MCF 10A (cell line): ENCODE measurements at regions of chr20 and their contacts with region 1.

Region 1: GRCh38 chr20:40970201-40970600 is 58.4 kb upstream of the TOP1 start:
- DNase-seq: no peak
- H3K4me3 Mint-ChIP-seq: no peak overlapping the region
- H3K27ac Mint-ChIP-seq: no peak overlapping the region
- H3K4me1 Mint-ChIP-seq: peaks cover 14% of the 10 kb centered on the region
- H3K27me3 Mint-ChIP-seq: no peaks in the 10 kb centered on the region
- CTCF ChIP-seq: no peak

Region 2: DNA sequence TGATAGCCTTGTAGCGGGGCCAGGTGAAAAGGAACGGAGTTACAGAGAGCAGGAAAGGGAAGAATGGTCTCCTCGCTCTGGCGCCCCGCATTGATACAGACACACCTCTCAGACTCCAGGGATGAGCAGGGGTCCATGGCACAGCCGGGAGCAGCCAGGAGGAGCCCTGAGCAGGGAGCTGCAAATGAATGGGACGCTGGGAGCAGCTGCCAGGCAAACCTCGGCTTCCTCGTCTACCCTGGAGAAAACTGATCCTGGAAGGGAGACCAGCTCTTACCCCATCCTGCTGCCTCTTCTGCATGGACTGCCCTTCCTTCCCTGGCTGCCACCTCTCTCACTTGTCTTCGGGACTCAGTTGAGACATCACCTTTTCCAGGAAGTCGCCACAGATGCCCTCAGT is 183.9 kb before region 1 on chr20:
- CTCF ChIA-PET with region 1: no interaction called
- POLR2A ChIA-PET with region 1: no interaction called
- intact Hi-C with region 1: no loop called
- DNase-seq: no peak
- H3K4me3 Mint-ChIP-seq: no peak overlapping the region
- H3K27ac Mint-ChIP-seq: no peak overlapping the region
- H3K4me1 Mint-ChIP-seq: no peaks in the 10 kb centered on the region
- H3K27me3 Mint-ChIP-seq: peaks cover 23% of the 10 kb centered on the region
- CTCF ChIP-seq: no peak

Region 3: GRCh38 chr20:40956542-40957264 is 13.5 kb before region 1 on chr20:
- CTCF ChIA-PET with region 1: interaction called, 287 read pairs
- POLR2A ChIA-PET with region 1: no interaction called
- intact Hi-C with region 1: no loop called
- DNase-seq: no peak
- H3K4me3 Mint-ChIP-seq: no peak overlapping the region
- H3K27ac Mint-ChIP-seq: no peak overlapping the region
- H3K4me1 Mint-ChIP-seq: peaks cover 6% of the 10 kb centered on the region
- H3K27me3 Mint-ChIP-seq: no peaks in the 10 kb centered on the region
- CTCF ChIP-seq: no peak

Region 4: DNA sequence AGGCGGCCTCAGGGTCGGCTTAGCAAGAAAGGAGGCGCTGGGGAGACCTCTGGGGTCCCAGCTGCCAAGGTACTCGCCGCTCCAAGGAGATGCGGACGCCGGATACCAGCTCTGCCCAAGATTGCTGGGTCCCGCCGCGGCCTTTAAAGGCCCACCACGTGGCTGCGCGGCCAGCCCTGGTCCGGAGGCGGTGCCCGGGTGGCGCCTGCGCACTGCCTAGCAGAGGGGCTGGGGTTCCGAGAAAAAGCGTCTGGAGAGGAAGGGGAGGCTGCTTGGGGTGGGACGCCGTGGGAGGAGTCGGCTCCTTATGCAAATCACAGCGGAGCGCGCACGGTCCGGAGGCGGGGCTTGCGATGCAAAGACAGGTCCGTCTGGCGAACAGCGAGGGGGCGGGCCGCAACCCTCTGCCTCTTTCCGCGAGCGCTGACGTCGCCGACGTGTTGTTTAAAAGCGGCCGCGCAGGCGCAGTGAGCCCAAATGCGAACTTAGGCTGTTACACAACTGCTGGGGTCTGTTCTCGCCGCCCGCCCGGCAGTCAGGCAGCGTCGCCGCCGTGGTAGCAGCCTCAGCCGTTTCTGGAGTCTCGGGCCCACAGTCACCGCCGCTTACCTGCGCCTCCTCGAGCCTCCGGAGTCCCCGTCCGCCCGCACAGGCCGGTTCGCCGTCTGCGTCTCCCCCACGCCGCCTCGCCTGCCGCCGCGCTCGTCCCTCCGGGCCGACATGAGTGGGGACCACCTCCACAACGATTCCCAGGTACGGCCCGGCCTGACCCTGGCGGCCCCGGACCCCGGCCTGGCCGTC is 58.3 kb after region 1 on chr20 and contains the start of gene TOP1:
- CTCF ChIA-PET with region 1: interaction called, 3 read pairs
- POLR2A ChIA-PET with region 1: no interaction called
- intact Hi-C with region 1: loop called (anchors 2 kb)
- DNase-seq: peak; percentile 99
- H3K4me3 Mint-ChIP-seq: peak within 1 kb of the TSS; percentile 94
- H3K27ac Mint-ChIP-seq: peak within 1 kb of the TSS; percentile 100
- H3K4me1 Mint-ChIP-seq: peaks cover 41% of the 10 kb centered on the region
- H3K27me3 Mint-ChIP-seq: no peaks in the 10 kb centered on the region
- CTCF ChIP-seq: no peak
- total RNA-seq, gene TOP1: 141 and 174 TPM in 2 replicates

Region 5: GRCh38 chr20:41078329-41078728 is 108.1 kb after region 1 on chr20:
- CTCF ChIA-PET with region 1: interaction called, 24 read pairs
- POLR2A ChIA-PET with region 1: no interaction called
- intact Hi-C with region 1: loop called (anchors 1 kb)
- DNase-seq: peak; percentile 50
- H3K4me3 Mint-ChIP-seq: no peak overlapping the region
- H3K27ac Mint-ChIP-seq: peak overlapping the region; percentile 24
- H3K4me1 Mint-ChIP-seq: peaks cover 22% of the 10 kb centered on the region
- H3K27me3 Mint-ChIP-seq: no peaks in the 10 kb centered on the region
- CTCF ChIP-seq: peak; percentile 32

Region 6: DNA sequence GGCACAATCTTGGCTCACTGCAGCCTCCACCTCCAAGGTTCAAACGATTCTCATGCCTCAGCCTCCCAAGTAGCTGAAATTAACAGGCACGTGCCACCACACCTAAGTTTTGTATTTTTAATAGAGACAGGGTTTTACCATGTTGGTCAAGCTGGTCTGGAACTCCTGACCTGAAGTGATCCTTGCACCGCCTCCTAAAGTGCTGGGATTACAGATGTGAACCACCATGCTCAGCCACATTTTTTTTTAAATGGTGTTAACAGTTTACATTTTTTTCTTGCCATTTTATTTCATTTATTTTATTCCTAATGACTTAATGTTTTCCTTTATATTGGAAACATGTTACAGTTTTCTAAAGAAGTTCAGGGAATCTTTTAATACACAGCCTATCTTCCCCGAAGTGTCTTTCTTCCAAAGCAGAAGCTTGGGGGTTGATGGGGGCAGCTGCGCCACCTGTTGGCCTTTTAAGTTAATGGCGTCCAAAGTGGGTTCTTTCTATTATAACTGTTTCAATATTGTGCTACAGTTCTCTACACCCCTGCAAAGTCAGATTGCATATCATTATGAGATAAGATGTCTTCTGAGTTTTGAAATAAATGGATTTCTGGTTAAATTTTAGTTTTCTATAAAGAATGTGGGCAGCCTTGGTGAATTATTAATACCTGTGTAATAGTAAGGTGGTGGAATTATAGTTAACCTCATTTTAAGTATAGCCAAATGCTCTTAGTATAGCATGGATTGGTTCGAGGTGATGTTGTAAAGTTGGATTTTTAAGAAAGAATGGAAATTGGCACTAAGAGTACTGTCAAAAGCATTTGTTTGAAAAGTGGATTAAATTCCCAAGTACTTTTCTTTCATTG is 125.1 kb after region 1 on chr20:
- CTCF ChIA-PET with region 1: interaction called, 176 read pairs
- POLR2A ChIA-PET with region 1: interaction called, 15 read pairs
- intact Hi-C with region 1: loop called (anchors 1 kb)
- DNase-seq: peak; percentile 63
- H3K4me3 Mint-ChIP-seq: no peak overlapping the region
- H3K27ac Mint-ChIP-seq: no peak overlapping the region
- H3K4me1 Mint-ChIP-seq: peaks cover 6% of the 10 kb centered on the region
- H3K27me3 Mint-ChIP-seq: no peaks in the 10 kb centered on the region
- CTCF ChIP-seq: peak; percentile 82